Activated T-helper 2 cell treated with anti-CD3 and anti-CD28 coated beads, Interferon-gamma antibody, Interleukin-2, Interleukin-4, amounts not matched to agents 10 μg/mL and 5 μg/mL and 100 μg/mL, durations not matched to agents 14 hours and 24 hours and 36 hours (primary cell): ENCODE measurements at regions of chr3 and their contacts with region 1.

Region 1: DNA sequence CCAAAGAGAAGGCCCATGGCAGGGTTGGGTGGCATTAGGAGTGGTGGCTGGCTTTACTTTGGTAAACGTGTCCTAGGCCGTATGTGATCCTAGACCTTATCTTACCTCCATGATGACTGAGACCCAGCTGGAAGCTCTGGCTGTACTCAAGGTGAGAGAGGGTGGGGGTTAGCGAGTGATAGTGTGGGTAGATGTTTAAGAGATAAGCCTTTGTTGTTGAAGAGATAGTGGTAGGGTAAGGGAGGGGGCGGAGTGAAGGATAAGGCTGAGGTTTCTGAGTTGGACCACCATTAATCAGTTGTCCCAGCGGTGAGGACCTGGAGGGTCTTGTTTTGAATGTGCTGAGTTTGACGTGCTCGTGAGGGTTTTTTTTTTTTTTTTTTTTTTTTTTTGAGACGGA is 61.5 kb upstream of the ULK4 start:
- DNase-seq: peak; percentile 14
- H3K4me3 Mint-ChIP-seq: peak overlapping the region; percentile 37
- H3K27ac Mint-ChIP-seq: peak overlapping the region; percentile 82
- H3K4me1 Mint-ChIP-seq: peaks cover 65% of the 10 kb centered on the region
- H3K27me3 Mint-ChIP-seq: no peaks in the 10 kb centered on the region

Region 2: GRCh38 chr3:40827942-40828688 is 1195.3 kb before region 1 on chr3:
- intact Hi-C with region 1: no loop called
- DNase-seq: no peak
- H3K4me3 Mint-ChIP-seq: no peak overlapping the region
- H3K27ac Mint-ChIP-seq: no peak overlapping the region
- H3K4me1 Mint-ChIP-seq: no peaks in the 10 kb centered on the region
- H3K27me3 Mint-ChIP-seq: peaks cover 2% of the 10 kb centered on the region

Region 3: DNA sequence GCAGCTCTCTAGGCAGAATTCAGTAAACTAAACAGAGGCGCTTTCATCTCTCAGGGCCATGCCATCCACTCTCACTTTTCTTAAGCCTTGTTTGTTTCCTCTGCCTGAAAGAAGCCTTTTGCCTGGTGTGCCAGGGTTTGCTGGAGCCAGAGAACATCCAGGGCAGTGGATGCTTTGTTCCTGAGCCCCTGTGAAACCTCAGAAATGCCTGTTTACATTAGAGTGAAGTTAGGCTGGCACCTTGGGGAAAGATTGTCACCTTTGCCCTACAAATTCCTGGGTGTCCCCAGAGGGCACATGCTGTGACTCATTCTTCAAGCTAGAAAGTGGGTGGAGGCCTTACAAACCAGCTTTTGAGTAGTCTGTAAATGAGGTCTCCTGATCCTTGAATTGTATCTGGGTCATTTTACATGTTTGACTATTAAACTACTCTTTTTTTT is 57.1 kb after region 1 on chr3:
- intact Hi-C with region 1: loop called (anchors 2 kb)
- DNase-seq: no peak
- H3K4me3 Mint-ChIP-seq: no peak overlapping the region
- H3K27ac Mint-ChIP-seq: peak overlapping the region; percentile 96
- H3K4me1 Mint-ChIP-seq: peaks cover 48% of the 10 kb centered on the region
- H3K27me3 Mint-ChIP-seq: no peaks in the 10 kb centered on the region

Region 4: GRCh38 chr3:42101048-42101447 is 77.7 kb after region 1 on chr3:
- intact Hi-C with region 1: no loop called
- DNase-seq: no peak
- H3K4me3 Mint-ChIP-seq: no peak overlapping the region
- H3K27ac Mint-ChIP-seq: no peak overlapping the region
- H3K4me1 Mint-ChIP-seq: peaks cover 26% of the 10 kb centered on the region
- H3K27me3 Mint-ChIP-seq: no peaks in the 10 kb centered on the region